ENCODE measurements at regions of chrX and their contacts with region 1.

Region 1: GRCh38 chrX:38327007-38327774 is at the start of gene RPGR:
- DNase-seq: peak; percentile 96
- total RNA-seq, gene RPGR: 7.6 TPM

Region 2: GRCh38 chrX:37926700-37927099 is 400.5 kb before region 1 on chrX:
- intact Hi-C with region 1: loop called (anchors 5 kb)
- DNase-seq: no peak

Region 3: DNA sequence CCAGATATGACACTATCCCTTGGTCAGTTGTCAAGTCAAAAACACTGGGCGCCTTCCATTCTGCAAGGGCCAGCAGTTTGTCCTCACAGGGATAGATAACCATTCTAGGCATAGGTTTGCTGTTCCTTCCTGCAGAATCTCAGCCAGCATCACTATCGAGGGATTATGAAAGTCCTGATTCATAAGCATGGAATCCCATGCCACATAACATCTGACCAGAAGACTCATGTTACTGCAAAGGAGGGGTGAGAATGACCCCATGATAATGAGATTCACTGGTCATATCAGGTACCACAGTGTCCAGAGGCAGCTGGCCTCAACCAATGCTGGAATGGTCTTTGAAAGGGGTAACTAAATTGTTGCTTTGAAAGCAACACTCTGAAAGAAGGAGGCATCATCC is 109.9 kb after region 1 on chrX:
- intact Hi-C with region 1: no loop called
- DNase-seq: no peak